Dendritic cell treated with granulocyte-macrophage colony-stimulating factor and Interleukin-4, amounts not matched to agents 40 ng/mL and 50 ng/mL, for 4 days (primary cell): ENCODE measurements at regions of chr12 and their contacts with region 1.

Region 1: GRCh38 chr12:57476162-57476992 is 3.3 kb downstream of the ARHGAP9 start:
- H3K4me3 Mint-ChIP-seq: peak overlapping the region; percentile 96
- H3K27ac Mint-ChIP-seq: peak overlapping the region; percentile 97
- H3K4me1 Mint-ChIP-seq: peaks cover 87% of the 10 kb centered on the region
- H3K27me3 Mint-ChIP-seq: no peaks in the 10 kb centered on the region

Region 2: DNA sequence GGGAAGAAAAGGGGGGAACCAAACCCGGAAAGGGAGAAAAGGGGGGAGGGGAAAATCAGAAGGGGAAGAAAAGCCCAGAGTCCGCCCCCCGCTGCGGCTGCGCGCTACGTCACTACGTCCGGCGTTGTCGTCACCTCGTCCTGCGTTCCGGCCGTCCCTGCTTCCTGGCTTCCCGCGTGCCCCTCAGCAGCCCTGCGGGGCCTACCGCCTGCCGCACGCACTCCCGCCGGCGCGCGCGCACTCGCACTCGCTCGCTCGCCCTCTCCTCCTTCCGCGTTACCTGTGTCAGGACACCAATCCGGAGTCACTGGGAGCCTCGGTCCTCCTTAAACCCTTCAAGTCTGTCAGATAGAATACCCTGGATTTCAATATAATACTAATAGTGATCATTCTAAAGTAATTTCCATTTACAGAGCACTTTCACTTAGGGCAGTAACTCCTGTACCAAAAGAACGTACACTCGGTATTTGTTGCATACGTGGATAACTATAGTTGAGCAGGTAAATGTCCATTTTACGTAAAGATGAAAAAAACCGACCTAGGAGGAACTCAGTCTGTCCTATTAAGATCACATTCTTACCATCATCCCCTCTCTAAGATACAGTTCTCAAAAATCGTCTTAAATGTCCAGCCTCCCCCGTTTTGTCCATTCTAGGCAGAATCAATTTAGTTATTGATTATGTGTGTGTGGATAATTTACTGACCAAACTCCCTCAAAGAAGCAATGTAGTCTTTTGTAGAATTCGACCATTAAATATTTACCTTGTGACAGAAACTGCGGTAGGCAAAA is 45.3 kb before region 1 on chr12 and contains the start of gene R3HDM2:
- intact Hi-C with region 1: no loop called
- H3K4me3 Mint-ChIP-seq: peak within 1 kb of the TSS; percentile 88
- H3K27ac Mint-ChIP-seq: peak within 1 kb of the TSS; percentile 98
- H3K4me1 Mint-ChIP-seq: peaks cover 34% of the 10 kb centered on the region
- H3K27me3 Mint-ChIP-seq: no peaks in the 10 kb centered on the region

Region 3: GRCh38 chr12:57459055-57459749 is 17.2 kb before region 1 on chr12:
- intact Hi-C with region 1: loop called (anchors 2 kb)
- H3K4me3 Mint-ChIP-seq: peak overlapping the region; percentile 87
- H3K27ac Mint-ChIP-seq: peak overlapping the region; percentile 95
- H3K4me1 Mint-ChIP-seq: peaks cover 64% of the 10 kb centered on the region
- H3K27me3 Mint-ChIP-seq: peaks cover 38% of the 10 kb centered on the region

Region 4: GRCh38 chr12:57487597-57488401 is 11.4 kb after region 1 on chr12 and contains the start of gene MARS1:
- intact Hi-C with region 1: loop called (anchors 1 kb)
- H3K4me3 Mint-ChIP-seq: peak within 1 kb of the TSS; percentile 90
- H3K27ac Mint-ChIP-seq: peak within 1 kb of the TSS; percentile 91
- H3K4me1 Mint-ChIP-seq: peaks cover 33% of the 10 kb centered on the region
- H3K27me3 Mint-ChIP-seq: no peaks in the 10 kb centered on the region

Region 5: GRCh38 chr12:57520053-57520871 is 43.9 kb after region 1 on chr12 and contains the start of gene DDIT3:
- intact Hi-C with region 1: loop called (anchors 1 kb)
- H3K4me3 Mint-ChIP-seq: peak within 1 kb of the TSS; percentile 95
- H3K27ac Mint-ChIP-seq: peak within 1 kb of the TSS; percentile 98
- H3K4me1 Mint-ChIP-seq: peaks cover 69% of the 10 kb centered on the region
- H3K27me3 Mint-ChIP-seq: no peaks in the 10 kb centered on the region